Posterior vena cava (tissue), 2 donors: ENCODE measurements at regions of chr7 and their contacts with region 1.

Region 1: GRCh38 chr7:101602484-101603241 is 26.4 kb downstream of the MYL10 start:
- DNase-seq: peak; percentile 94

Region 2: DNA sequence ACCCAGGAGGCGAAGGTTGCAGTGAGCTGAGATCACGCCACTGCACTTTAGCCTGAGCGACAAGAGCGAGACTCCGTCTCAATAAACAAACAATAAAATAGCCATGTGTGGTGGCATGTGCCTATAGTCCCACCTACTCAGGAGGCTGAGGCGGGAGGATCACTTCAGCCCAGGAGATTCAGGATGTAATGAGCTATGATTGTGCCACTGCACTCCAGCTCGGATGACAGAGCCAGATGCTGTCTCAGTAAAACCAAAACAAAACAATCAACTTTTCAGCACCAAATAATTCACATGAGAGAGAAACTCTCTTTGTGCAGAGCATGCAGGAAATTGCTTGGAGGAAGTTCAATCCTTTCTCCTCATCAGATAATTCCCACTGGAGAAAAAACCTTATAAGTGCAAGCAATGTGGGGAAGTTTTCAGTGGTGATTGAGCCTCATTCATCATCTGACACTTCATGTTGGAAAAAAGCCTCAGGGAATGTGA is 344.4 kb before region 1 on chr7:
- intact Hi-C with region 1: no loop called
- DNase-seq: no peak

Region 3: GRCh38 chr7:101688183-101688831 is 85.6 kb after region 1 on chr7:
- intact Hi-C with region 1: loop called in 1 of 2 experiments (anchors 10 kb)
- DNase-seq: peak; percentile 95

Region 4: GRCh38 chr7:102236592-102237287 is 634.1 kb after region 1 on chr7:
- intact Hi-C with region 1: loop called in 1 of 2 experiments (anchors 5 kb)
- DNase-seq: no peak

Region 5: DNA sequence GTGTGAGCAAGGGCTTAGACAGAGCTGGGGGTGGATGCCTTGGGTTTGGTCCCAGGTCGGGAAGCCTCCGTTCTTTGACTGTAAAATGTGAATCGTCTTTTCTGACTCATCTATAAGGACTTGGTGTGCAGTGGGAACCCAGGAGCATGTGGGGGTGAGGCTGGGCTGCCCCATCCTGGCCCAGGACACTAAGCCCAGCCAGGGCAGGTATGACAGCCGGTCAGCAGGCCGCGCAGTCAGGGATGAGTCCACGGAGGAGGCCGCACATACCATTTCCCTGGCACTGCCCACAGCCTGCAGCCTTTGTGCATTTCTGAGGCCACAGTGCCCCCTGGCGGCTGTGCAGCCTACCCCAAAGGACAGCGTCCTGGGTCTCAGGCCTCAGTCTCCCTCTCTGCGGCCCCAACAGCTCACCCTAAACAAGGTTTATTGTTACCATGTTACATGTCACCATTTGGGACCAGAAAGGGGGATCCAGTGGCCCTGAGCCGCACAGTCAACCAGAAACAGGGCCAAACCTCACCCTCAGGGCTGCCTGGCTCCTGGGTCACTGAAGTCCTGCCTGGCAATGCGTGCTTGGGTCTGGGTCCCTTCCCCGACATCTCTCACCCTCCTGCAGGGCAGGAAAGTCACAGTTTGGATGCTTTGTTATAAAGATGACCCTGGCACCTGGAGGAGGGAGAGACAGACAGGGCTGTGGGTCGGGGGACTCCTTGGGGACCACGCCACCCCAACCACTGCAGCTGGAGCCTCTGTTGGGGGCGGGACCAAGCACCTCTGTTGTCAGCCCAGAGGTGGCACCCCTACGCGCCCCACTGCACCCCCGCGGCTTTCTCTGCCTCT is 669.6 kb after region 1 on chr7:
- intact Hi-C with region 1: loop called in 1 of 2 experiments (anchors 5 kb)
- DNase-seq: peak; percentile 92

Region 6: GRCh38 chr7:102306875-102307677 is 704.4 kb after region 1 on chr7:
- intact Hi-C with region 1: no loop called
- DNase-seq: no peak